CD4-positive, alpha-beta memory T cell (primary cell): ENCODE measurements at regions of chr6 and their contacts with region 1.

Region 1: DNA sequence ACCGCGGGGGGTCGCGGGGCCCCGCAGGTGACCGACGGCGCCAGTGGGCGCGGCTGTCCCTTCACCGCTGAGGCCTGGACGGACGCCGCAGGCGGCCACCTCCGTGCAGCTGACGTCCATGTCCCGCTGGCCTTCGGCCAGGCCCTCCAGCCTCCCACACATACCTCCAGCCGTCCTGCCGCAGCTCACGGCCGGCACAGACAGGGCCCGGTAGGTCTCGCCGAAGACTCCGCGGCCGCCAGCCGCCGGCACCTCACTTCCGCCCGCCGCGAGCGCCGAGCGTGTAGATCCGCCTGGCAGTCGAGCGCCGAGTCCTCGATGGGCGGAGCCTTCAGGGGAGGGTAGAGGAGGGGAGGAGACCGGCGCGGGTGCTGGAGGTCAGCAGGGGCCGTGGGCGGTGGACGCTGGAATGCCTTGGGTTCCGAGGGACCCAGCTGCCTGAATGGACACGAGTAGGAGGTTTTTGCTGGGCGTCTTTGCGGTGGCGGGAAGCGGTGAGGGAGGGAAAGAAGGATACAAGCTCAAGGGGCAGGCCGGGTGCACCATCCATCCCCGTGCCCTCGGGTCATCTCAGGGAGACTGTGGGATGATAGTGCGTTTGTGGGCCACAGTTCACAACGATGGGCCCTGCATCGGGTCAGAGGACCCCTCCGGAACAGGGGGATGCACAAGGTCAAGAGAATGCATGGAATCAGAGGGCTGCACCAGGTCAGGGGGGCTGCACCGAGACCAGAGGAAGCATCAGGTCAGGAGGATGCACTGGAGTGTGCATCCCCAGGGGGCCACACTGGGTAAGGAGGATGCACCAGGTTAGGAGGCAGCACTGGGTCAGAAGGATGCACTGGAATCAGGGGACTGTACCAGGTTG is at the start of gene EXOC2:
- DNase-seq: peak; percentile 80 to 83 (median 82)
- H3K4me3 ChIP-seq: peak within 1 kb of the TSS; percentile 81 to 89
- H3K4me3 Mint-ChIP-seq: peak within 1 kb of the TSS; percentile 94 to 98 (median 96)
- H3K27ac ChIP-seq: peak within 1 kb of the TSS; percentile 77
- H3K27ac Mint-ChIP-seq: peak within 1 kb of the TSS; percentile 93 to 97 (median 94)
- H3K4me1 ChIP-seq: peaks cover 35% of the 10 kb centered on the region
- H3K4me1 Mint-ChIP-seq: peaks cover 25 to 50% (median 29%) of the 10 kb centered on the region in 4 donors
- H3K27me3 ChIP-seq: no peaks in the 10 kb centered on the region
- H3K27me3 Mint-ChIP-seq: no peaks in the 10 kb centered on the region
- total RNA-seq, gene EXOC2: 44.6 to 47.6 TPM

Region 2: GRCh38 chr6:704046-704445 is 11.0 kb after region 1 on chr6:
- CTCF ChIA-PET with region 1: interaction called, 4 read pairs
- POLR2A ChIA-PET with region 1: interaction called, 11 read pairs
- intact Hi-C with region 1: no loop called
- DNase-seq: no peak
- H3K4me3 ChIP-seq: no peak overlapping the region
- H3K4me3 Mint-ChIP-seq: no peak overlapping the region
- H3K27ac ChIP-seq: no peak overlapping the region
- H3K27ac Mint-ChIP-seq: no peak overlapping the region
- H3K4me1 ChIP-seq: no peaks in the 10 kb centered on the region
- H3K4me1 Mint-ChIP-seq: peaks cover 0 to 1% (median 0%) of the 10 kb centered on the region in 4 donors
- H3K27me3 ChIP-seq: no peaks in the 10 kb centered on the region
- H3K27me3 Mint-ChIP-seq: peaks cover 7 to 9% of the 10 kb centered on the region in 2 donors

Region 3: DNA sequence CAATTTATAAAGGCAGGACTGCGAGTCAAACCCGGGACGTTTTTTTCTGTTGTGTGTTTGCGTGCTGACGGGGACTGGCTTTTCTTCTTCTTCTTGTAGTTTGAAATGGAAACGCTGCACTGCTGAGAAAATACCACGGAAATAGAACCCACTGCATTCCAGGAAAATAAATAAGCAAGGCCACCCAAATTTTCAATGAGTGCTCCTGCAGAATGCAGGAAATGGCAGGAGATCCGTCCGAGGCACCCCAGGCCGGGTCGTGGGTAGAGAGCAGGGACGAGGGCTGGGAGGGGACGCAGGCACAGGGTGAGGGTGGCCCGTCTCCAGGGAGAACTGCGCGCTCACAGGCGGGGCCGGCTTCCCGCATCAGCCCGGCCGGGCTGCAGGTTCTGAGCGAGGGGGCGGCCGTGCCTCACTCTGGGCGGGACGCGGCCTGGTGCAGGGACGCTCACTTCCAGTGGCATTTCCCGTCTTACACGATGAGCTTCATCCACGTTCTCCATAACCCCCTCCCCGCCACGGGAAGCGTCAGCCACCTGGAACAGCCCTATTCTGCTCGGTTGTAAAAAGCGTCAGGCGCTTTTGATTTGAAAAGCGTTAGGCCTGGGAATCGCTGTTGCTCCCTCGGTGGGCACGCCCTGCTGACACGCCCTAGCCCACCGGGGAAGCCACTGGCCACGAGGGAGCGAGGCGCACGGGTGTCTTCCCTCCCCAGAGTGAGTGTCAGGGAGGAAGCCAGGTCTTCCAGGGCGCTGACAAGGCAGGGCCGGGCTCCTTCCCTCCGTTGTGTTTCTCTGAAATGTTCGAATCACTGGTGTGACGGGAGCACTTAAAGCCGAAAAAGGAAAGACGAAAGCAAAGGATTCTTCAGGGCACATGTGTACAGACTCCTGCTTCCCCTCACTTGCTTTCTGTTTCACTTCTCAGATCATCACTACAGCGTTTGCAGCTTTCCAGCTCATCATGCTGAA is 17.8 kb after region 1 on chr6:
- CTCF ChIA-PET with region 1: interaction called, 3 read pairs
- POLR2A ChIA-PET with region 1: interaction called, 25 read pairs
- intact Hi-C with region 1: loop called (anchors 1 kb)
- DNase-seq: peak; percentile 58 to 68 (median 63)
- H3K4me3 ChIP-seq: peak overlapping the region; percentile 50 to 81
- H3K4me3 Mint-ChIP-seq: peak overlapping the region; percentile 96 to 99 (median 99)
- H3K27ac ChIP-seq: peak overlapping the region; percentile 84
- H3K27ac Mint-ChIP-seq: peak overlapping the region; percentile 93 to 100 (median 98)
- H3K4me1 ChIP-seq: peaks cover 15% of the 10 kb centered on the region
- H3K4me1 Mint-ChIP-seq: peaks cover 12 to 24% (median 18%) of the 10 kb centered on the region in 4 donors
- H3K27me3 ChIP-seq: no peaks in the 10 kb centered on the region
- H3K27me3 Mint-ChIP-seq: peaks cover 7 to 9% of the 10 kb centered on the region in 2 donors